AG04449 (cell line): ENCODE measurements at regions of chr1 and their contacts with region 1.

Region 1: DNA sequence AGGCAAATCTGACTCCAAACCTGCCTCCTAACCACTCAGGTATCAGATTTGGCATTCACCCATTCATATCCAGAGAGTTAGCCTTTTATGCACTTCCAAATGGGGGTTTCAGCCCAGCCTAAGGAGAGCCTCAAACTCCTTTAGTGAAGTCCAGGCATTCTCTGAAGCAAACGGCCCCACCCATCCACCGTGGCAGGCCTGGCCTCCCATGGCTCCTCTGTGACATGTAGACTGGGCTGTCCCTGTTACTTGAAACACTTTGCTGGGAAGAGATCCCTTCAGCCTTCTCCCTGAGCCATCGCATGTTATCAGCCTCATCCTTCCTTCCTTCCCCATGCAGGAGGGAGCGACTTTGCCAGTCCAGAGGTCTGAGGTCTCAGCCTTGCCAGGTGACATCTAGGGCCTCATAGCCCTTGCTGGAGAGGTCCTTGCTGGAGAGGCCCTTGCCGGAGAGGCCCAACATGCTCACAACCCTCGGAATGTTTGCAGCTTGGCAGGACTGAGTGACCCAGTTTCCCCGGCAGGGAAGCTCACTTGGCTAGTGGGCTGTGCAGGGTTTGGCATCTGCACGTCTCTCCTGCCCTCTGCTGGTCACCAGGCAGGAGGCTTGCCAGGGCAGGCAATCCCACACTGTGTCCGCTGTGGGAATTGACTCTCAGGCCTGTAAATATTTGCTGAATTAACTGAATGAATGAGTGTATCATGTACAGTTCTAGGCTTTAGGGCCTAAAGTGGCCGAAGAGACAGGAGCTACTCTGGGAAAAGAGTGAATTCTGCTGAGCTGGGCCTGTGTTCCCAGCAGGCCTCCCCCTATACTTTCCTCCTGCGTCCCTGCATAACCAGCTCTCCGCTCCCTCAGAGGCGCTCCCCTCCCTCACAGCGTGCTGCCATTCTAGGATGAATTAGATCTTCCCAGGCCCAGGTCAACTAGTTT is 26.7 kb upstream of the RBM15 start:
- DNase-seq: no peak
- H3K4me3 ChIP-seq: no peak overlapping the region
- CTCF ChIP-seq: peak; percentile 97

Region 2: GRCh38 chr1:110224240-110224995 is 88.0 kb before region 1 on chr1:
- CTCF ChIA-PET with region 1: interaction called, 12 read pairs
- POLR2A ChIA-PET with region 1: no interaction called
- DNase-seq: no peak
- H3K4me3 ChIP-seq: no peak overlapping the region
- CTCF ChIP-seq: no peak

Region 3: DNA sequence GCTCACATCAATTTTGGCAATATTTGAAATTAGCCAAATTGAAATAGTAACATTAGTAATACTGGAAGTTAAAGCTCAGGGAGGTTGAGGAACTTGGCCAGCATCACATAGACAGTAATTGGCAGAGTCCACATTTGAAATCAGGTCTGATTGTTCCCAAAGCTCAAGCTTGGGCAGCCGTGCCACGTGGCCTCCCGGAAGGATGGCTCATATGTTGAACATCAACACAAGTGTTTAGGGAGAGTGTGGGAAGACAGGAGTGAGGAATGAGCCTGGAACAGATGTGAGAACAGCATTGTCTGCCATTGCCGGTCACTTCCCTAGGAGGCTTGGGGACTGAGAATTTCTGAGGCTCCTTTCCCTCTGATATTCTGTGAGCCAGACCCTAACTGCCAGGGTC is 13.5 kb before region 1 on chr1:
- CTCF ChIA-PET with region 1: interaction called, 25 read pairs
- POLR2A ChIA-PET with region 1: no interaction called
- DNase-seq: no peak
- H3K4me3 ChIP-seq: no peak overlapping the region
- CTCF ChIP-seq: no peak

Region 4: DNA sequence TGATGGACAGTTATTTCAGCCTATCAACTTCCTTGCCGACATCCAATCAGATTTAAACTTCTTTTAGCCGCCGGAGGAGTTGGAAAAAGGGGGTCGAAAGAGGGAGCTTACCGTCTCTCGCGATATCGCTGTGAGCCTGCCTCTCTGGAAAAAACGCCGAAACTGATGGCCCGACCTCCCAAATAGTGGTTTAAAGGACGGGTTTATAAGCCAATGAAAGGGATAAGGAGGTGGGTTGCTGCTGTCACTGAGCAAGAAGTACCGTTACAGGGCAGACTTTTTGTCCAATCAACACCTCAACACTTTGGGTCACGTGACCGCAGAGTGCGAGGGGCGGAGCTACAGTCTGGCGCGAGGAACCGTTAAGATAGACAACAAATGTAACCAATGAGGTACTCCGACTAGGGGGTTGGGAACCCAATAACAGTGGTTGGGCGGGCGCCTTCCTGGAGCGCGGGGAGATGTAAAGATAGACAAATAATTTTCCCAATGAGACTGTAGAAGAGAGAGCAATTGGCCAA is 26.5 kb after region 1 on chr1 and contains the start of gene RBM15:
- CTCF ChIA-PET with region 1: interaction called, 114 read pairs
- POLR2A ChIA-PET with region 1: interaction called, 3 read pairs
- DNase-seq: peak; percentile 100
- H3K4me3 ChIP-seq: peak within 1 kb of the TSS; percentile 98
- CTCF ChIP-seq: no peak